ENCODE measurements at regions of chr6 and their contacts with region 1.

Region 1: GRCh38 chr6:52263709-52264540 is 19.6 kb upstream of the IL17F start:
- H3K4me3 ChIP-seq: no peak overlapping the region
- H3K27ac ChIP-seq: peak overlapping the region; percentile 29; the same call in 1 of the 2 replicates
- H3K4me1 ChIP-seq: no peaks in the 10 kb centered on the region
- CTCF ChIP-seq: peak; percentile 83

Region 2: DNA sequence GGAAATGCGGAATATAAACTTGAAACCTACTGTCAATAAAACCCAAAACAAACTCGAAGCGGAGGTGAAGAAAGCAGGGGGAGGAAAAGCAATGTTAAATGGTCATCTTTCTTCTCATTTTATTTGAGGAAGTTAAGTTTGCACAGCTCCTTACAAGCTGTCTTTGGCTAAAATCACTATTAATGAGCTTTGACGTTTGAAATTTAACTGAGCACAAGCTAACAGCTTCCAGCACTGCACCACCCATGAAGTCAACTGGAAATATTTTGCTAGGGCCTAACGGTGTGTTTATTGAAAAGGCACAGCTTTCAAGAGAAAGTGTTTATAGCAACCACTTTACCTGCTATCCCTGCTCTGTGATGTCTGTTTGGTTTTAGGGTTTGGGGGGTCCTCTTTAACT is 280.4 kb before region 1 on chr6:
- CTCF ChIA-PET with region 1: no interaction called
- POLR2A ChIA-PET with region 1: no interaction called
- H3K4me3 ChIP-seq: no peak overlapping the region
- H3K27ac ChIP-seq: no peak overlapping the region
- H3K4me1 ChIP-seq: no peaks in the 10 kb centered on the region
- CTCF ChIP-seq: no peak

Region 3: GRCh38 chr6:52049252-52050050 is 214.5 kb before region 1 on chr6:
- CTCF ChIA-PET with region 1: interaction called, 12 read pairs
- POLR2A ChIA-PET with region 1: no interaction called
- H3K4me3 ChIP-seq: no peak overlapping the region
- H3K27ac ChIP-seq: no peak overlapping the region
- H3K4me1 ChIP-seq: 0 out of 2 replicates have a peak, but pooled peaks cover 2% of the 10 kb centered on the region
- CTCF ChIP-seq: peak; percentile 24; the same call in 1 of the 2 replicates

Region 4: GRCh38 chr6:52063584-52064344 is 200.2 kb before region 1 on chr6:
- CTCF ChIA-PET with region 1: interaction called, 15 read pairs
- POLR2A ChIA-PET with region 1: no interaction called
- H3K4me3 ChIP-seq: no peak overlapping the region
- H3K27ac ChIP-seq: no peak overlapping the region
- H3K4me1 ChIP-seq: no peaks in the 10 kb centered on the region; the same call in 1 of the 2 replicates
- CTCF ChIP-seq: peak; percentile 48

Region 5: GRCh38 chr6:52155791-52156576 is 107.9 kb before region 1 on chr6:
- CTCF ChIA-PET with region 1: interaction called, 24 read pairs
- POLR2A ChIA-PET with region 1: interaction called, 3 read pairs
- H3K4me3 ChIP-seq: no peak overlapping the region
- H3K27ac ChIP-seq: no peak overlapping the region
- H3K4me1 ChIP-seq: peaks cover 5% of the 10 kb centered on the region; the same call in 1 of the 2 replicates
- CTCF ChIP-seq: no peak

Region 6: DNA sequence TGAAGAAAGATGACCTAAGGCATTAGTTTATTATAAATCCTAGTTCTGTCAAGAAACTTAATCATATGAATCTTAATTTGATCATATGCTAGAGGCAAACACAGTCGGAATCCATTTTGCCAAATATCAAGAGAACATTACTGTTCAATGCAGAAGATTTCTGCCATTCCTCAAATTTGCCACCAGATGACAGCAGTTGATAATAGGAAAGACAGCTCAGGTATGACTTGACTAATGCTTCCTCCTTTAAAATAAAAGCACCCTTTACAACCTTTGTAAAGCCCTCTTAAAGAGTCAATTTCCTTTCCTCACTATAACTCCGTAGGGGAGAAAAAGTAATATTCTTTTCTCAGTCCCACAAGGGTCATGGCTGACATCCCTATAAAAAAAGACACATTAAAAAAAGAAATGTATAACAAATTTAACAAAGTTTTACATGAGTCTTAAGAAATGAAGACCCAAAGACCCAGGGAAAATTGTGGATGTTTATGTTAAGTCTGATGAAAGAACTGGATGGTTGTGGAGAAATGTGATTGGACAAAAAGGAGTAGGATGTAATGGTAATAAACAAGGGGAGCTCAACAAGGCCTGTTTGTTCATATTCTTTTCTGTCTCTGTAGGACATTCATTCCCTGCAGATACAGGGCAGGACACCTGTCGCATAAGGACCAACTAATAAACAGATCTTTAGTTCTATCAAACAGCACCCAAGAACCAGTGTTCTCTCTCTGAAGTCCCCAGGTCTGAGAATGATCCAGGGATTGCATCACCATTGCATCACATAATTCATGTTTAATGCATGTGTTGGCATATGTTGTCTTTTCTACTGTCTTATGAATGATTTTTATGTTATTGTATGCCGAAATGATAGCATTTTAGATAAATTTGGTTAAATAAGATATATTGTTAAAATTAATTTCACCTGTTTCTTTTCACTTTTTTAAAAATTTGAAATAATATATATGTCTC is 100.7 kb before region 1 on chr6:
- CTCF ChIA-PET with region 1: interaction called, 146 read pairs
- POLR2A ChIA-PET with region 1: interaction called, 5 read pairs
- H3K4me3 ChIP-seq: no peak overlapping the region
- H3K27ac ChIP-seq: no peak overlapping the region
- H3K4me1 ChIP-seq: peaks cover 9% of the 10 kb centered on the region; the same call in 1 of the 2 replicates
- CTCF ChIP-seq: peak; percentile 77

Region 7: DNA sequence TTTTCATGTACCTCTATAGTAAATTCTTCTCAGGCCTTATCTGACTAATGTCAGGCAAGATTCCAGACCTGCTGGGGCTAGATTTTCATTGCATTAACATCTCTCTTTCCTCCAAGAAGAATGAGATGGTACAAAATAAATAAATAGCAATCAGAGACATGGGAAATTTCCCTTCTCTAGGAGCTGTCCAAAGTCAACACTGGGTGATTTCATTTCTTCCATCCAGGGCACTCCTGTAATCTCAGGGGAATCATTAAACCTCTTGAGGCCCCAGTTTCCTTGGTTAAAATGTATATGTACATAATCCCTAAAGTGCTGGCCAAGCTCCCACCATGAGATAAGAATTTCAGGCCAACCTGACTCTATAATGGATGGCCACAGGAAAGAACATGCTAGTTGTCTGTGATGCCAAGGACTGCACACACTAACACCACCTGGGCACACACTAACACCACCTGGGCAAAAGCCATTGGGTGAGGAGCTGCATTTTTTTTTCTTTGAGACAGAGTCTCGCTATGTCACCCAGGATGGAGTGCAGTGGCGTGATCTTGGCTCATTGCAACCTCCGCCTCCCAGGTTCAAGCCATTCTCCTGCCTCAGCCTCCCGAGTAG is 20.5 kb before region 1 on chr6:
- CTCF ChIA-PET with region 1: interaction called, 39 read pairs
- POLR2A ChIA-PET with region 1: interaction called, 5 read pairs
- H3K4me3 ChIP-seq: no peak overlapping the region
- H3K27ac ChIP-seq: peak overlapping the region; percentile 70
- H3K4me1 ChIP-seq: peaks cover 19% of the 10 kb centered on the region
- CTCF ChIP-seq: no peak

Region 8: DNA sequence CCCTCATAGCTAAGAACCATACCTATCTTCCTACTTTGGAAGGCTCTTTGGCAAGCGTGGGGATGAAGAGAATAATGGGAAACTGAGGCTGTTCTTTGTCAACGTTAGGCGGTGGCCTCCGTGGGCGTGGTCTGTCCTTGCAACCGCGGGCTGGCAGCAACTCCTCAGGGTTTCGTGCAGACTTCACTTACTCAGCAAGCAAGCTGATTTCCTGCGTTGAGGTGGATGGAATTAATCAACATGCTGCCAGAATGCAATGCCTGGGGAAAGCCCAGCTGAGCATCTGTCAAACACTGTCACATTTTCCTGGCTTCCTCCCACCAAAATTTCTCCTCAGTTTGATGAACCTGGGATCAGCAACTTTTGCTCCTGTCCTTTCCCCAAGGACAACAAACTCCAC is 10.4 kb before region 1 on chr6:
- CTCF ChIA-PET with region 1: interaction called, 20 read pairs
- POLR2A ChIA-PET with region 1: interaction called, 6 read pairs
- H3K4me3 ChIP-seq: no peak overlapping the region
- H3K27ac ChIP-seq: no peak overlapping the region
- H3K4me1 ChIP-seq: peaks cover 5% of the 10 kb centered on the region
- CTCF ChIP-seq: no peak

Measured in HEK293 (cell line).